CD8-positive, alpha-beta memory T cell (primary cell): ENCODE measurements at regions of chr17 and their contacts with region 1.

Region 1: DNA sequence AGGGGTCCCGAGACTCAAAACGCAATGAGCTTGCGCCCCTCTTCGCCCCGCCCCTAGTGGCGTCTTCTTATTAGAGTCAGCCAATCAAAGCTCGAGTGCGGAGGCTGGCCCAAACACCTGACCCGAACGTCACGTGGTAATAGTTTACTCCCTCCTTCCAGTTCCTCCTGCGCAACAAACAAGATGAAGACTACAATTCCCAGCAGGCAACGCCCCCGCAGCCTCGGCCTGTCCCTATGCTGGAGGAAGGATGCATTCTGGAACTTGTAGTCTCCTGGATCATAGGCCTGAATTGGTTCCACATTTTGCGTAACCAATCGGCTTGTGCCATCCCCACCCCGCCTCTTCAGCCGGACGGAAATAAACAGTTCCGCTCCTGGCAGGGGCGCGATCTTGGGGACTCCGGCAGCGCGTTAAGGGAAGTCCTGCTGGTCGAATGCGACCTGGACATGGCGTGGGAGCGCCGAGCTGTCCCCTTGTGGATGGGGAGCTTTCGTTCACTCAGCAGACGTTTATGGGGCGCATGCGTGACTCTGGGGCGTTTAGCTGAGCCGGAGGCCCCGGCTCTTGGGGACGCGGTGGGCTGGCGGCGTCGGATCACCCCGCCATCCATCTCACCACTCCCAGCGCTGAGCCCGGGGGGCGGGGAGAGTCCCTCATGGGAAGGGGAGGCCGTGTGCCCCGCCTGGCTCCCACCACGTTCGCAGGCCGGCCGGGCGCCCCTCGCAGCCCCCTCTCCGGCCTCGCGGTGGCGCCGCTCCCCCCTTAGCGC is at the start of gene WBP2:
- DNase-seq: peak; percentile 94 to 99 (median 98)
- H3K4me3 ChIP-seq: peak within 1 kb of the TSS; percentile 91
- H3K4me3 Mint-ChIP-seq: peak within 1 kb of the TSS in 1 of 7 donors; percentile 92
- H3K27ac ChIP-seq: peak within 1 kb of the TSS; percentile 89
- H3K27ac Mint-ChIP-seq: peak within 1 kb of the TSS in 7 of 8 donors; percentile 83 to 93 (median 88)
- H3K4me1 ChIP-seq: peaks cover 22% of the 10 kb centered on the region
- H3K4me1 Mint-ChIP-seq: peaks cover 21 to 37% (median 21%) of the 10 kb centered on the region in 3 donors
- H3K27me3 ChIP-seq: no peaks in the 10 kb centered on the region
- H3K27me3 Mint-ChIP-seq: no peaks in the 10 kb centered on the region
- total RNA-seq, gene WBP2: 47.5 to 53.2 TPM

Region 2: DNA sequence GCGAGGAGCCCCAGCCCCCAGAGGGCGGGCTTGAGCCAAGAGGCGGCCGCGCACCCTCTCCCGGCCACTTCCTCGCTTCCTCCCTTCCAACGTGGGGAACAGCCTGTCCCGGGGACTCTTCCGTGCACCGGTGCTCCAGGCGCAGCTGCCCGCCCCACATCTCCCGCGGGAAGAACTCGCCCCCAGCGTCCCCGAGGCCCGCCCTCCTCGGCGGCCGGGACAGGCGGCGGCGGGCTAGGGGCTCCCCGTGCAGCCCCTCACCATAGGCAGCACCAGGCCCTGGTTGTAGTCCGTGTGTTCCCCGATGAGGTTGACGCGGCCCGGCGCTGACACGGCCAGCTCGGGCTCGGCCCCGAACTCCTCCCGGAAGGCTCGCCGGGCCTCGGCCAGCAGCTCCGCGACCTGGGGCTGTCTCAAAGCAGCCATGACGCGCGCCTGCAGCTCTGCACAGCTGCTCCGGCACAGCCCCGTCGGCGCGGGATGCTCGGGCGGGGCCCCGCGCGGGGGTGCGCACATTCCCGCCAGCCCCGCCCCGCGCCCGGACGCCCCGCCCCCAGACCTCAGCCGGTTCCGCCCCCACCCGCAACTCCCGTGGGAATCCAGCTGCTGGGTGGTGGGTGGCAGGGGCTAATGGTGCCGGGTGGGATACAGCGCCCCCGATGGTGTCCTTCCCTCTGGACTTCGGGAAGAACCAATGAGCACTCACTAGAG is 90.6 kb before region 1 on chr17 and contains the start of gene GALK1:
- CTCF ChIA-PET with region 1: interaction called, 18 read pairs
- POLR2A ChIA-PET with region 1: interaction called, 12 read pairs
- DNase-seq: peak; percentile 66 to 81 (median 68)
- H3K4me3 ChIP-seq: peak within 1 kb of the TSS; percentile 64
- H3K4me3 Mint-ChIP-seq: peak within 1 kb of the TSS; percentile 65 to 90 (median 74)
- H3K27ac ChIP-seq: peak within 1 kb of the TSS; percentile 61
- H3K27ac Mint-ChIP-seq: peak within 1 kb of the TSS; percentile 23 to 92 (median 64)
- H3K4me1 ChIP-seq: peaks cover 13% of the 10 kb centered on the region
- H3K4me1 Mint-ChIP-seq: peaks cover 9 to 27% (median 12%) of the 10 kb centered on the region in 3 donors
- H3K27me3 ChIP-seq: no peaks in the 10 kb centered on the region
- H3K27me3 Mint-ChIP-seq: no peaks in the 10 kb centered on the region
- total RNA-seq, gene GALK1: 33.2 to 39.7 TPM

Region 3: GRCh38 chr17:75784473-75785015 is 71.0 kb before region 1 on chr17 and contains the start of gene UNK:
- CTCF ChIA-PET with region 1: interaction called, 32 read pairs
- POLR2A ChIA-PET with region 1: interaction called, 49 read pairs
- DNase-seq: peak; percentile 89 to 98 (median 97)
- H3K4me3 ChIP-seq: peak within 1 kb of the TSS; percentile 67
- H3K4me3 Mint-ChIP-seq: peak within 1 kb of the TSS; percentile 93 to 97 (median 93)
- H3K27ac ChIP-seq: peak within 1 kb of the TSS; percentile 98
- H3K27ac Mint-ChIP-seq: peak within 1 kb of the TSS; percentile 99 to 100 (median 100)
- H3K4me1 ChIP-seq: peaks cover 46% of the 10 kb centered on the region
- H3K4me1 Mint-ChIP-seq: peaks cover 39 to 70% (median 51%) of the 10 kb centered on the region in 3 donors
- H3K27me3 ChIP-seq: no peaks in the 10 kb centered on the region
- H3K27me3 Mint-ChIP-seq: peaks cover 0 to 6% of the 10 kb centered on the region in 2 donors
- total RNA-seq, gene UNK: 24.4 to 29.3 TPM

Region 4: DNA sequence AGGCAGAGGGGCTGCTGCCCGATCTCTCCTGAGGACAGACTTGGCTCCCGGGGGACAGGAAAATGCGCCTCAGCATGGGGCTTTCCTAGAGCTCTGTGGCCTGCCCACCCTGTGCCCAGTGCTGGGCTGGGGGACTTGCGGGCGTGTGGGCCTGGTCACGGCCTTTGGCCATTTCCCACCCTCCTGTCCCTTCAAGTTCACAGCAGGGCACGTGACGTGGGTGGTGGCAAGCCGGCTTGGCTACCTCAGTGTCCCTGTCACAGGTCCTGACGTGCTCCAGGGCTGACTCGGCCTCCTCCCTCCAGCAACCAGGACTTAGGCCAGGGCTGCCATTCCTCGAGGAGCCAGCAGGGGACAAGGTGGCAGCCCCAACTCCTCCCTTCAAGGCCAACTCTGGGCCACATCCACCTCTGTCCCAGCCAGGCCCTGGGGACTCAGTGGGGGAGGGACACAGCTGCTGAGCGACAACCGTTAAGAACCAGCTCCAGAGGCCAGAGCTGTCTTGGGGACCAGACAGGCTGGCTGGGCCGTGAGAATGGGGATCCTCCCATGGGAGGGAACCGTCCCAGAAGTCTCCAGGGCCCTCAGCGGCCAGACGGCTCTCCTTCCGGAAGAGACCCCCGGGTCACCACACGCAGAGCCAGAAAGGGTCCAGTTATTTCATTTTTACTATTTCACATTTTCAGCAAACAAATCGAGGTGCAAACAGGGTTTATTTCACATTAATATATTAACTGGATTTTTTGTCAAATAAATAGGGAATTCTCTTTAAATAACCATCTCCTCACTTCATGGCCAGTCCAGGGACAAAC is 10.2 kb before region 1 on chr17:
- CTCF ChIA-PET with region 1: interaction called, 38 read pairs
- POLR2A ChIA-PET with region 1: interaction called, 61 read pairs
- DNase-seq: peak in 4 of 5 donors; percentile 37 to 70 (median 42)
- H3K4me3 ChIP-seq: no peak overlapping the region
- H3K4me3 Mint-ChIP-seq: peak overlapping the region; percentile 16 to 84 (median 46)
- H3K27ac ChIP-seq: peak overlapping the region; percentile 89
- H3K27ac Mint-ChIP-seq: peak overlapping the region; percentile 30 to 89 (median 66)
- H3K4me1 ChIP-seq: peaks cover 36% of the 10 kb centered on the region
- H3K4me1 Mint-ChIP-seq: peaks cover 16 to 36% (median 17%) of the 10 kb centered on the region in 3 donors
- H3K27me3 ChIP-seq: no peaks in the 10 kb centered on the region
- H3K27me3 Mint-ChIP-seq: no peaks in the 10 kb centered on the region

Region 5: GRCh38 chr17:75877752-75878173 is 22.3 kb after region 1 on chr17:
- CTCF ChIA-PET with region 1: interaction called, 46 read pairs
- POLR2A ChIA-PET with region 1: interaction called, 82 read pairs
- DNase-seq: peak; percentile 49 to 79 (median 67)
- H3K4me3 ChIP-seq: peak overlapping the region; percentile 61
- H3K4me3 Mint-ChIP-seq: peak overlapping the region; percentile 83 to 90 (median 86)
- H3K27ac ChIP-seq: peak overlapping the region; percentile 43
- H3K27ac Mint-ChIP-seq: peak overlapping the region; percentile 76 to 96 (median 87)
- H3K4me1 ChIP-seq: peaks cover 40% of the 10 kb centered on the region
- H3K4me1 Mint-ChIP-seq: peaks cover 35 to 59% (median 39%) of the 10 kb centered on the region in 3 donors
- H3K27me3 ChIP-seq: no peaks in the 10 kb centered on the region
- H3K27me3 Mint-ChIP-seq: peaks cover 0 to 5% of the 10 kb centered on the region in 2 donors

Region 6: GRCh38 chr17:75904749-75905521 is 49.4 kb after region 1 on chr17 and contains the start of gene MRPL38:
- CTCF ChIA-PET with region 1: interaction called, 10 read pairs
- POLR2A ChIA-PET with region 1: interaction called, 4 read pairs
- DNase-seq: peak; percentile 86 to 97 (median 94)
- H3K4me3 ChIP-seq: peak within 1 kb of the TSS; percentile 64
- H3K4me3 Mint-ChIP-seq: peak within 1 kb of the TSS; percentile 81 to 94 (median 88)
- H3K27ac ChIP-seq: peak within 1 kb of the TSS; percentile 69
- H3K27ac Mint-ChIP-seq: peak within 1 kb of the TSS; percentile 84 to 97 (median 91)
- H3K4me1 ChIP-seq: peaks cover 13% of the 10 kb centered on the region
- H3K4me1 Mint-ChIP-seq: peaks cover 3 to 14% (median 5%) of the 10 kb centered on the region in 3 donors
- H3K27me3 ChIP-seq: no peaks in the 10 kb centered on the region
- H3K27me3 Mint-ChIP-seq: peaks cover 0 to 2% of the 10 kb centered on the region in 2 donors
- total RNA-seq, gene MRPL38: 171 to 180 TPM

Region 7: DNA sequence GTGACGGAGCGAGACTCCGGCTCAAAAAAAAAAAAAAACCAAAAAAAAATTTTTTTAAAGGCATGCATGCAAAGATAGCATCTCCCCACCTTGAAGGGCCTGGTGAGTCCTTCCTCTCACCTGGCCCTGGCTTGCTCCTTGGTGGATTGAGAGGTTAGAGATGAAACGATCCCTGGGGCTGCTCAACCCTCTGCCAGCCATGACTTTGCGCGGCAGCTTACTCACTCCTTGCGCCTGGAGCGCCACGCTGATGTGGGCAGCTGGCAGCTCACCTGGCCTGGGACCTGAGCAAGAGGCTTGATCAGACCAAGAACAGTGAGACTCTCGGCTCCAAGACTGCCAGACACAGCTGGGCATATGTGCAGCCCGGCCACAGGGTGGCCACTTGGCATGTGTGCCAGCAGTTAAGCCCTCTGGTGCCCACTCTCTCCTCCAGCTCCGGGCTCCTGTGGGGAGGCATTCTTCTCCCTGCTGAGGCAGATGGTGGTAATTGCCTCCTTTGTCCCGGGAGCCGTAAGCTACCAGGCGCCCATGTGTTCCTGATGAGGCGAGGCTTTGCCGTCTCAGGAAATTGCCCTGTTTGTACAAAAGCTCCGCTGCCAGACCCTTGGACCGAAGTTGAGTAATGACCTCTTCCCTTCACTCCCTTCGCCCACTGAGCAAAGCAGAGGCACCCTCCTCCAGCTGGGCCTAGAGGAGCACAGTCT is 176.7 kb after region 1 on chr17:
- CTCF ChIA-PET with region 1: no interaction called
- POLR2A ChIA-PET with region 1: no interaction called
- DNase-seq: no peak
- H3K4me3 ChIP-seq: no peak overlapping the region
- H3K4me3 Mint-ChIP-seq: no peak overlapping the region
- H3K27ac ChIP-seq: no peak overlapping the region
- H3K27ac Mint-ChIP-seq: peak overlapping the region in 1 of 8 donors; percentile 23
- H3K4me1 ChIP-seq: peaks cover 17% of the 10 kb centered on the region
- H3K4me1 Mint-ChIP-seq: peaks cover 14 to 25% (median 17%) of the 10 kb centered on the region in 3 donors
- H3K27me3 ChIP-seq: no peaks in the 10 kb centered on the region
- H3K27me3 Mint-ChIP-seq: peaks cover 0 to 1% of the 10 kb centered on the region in 2 donors